ENCODE measurements at regions of chr4 and their contacts with region 1.

Region 1: GRCh38 chr4:86921608-86922252 is 13.1 kb upstream of the AFF1 start:
- DNase-seq: no peak
- H3K4me3 ChIP-seq: no peak overlapping the region
- H3K27ac ChIP-seq: no peak overlapping the region
- H3K4me1 ChIP-seq: no peaks in the 10 kb centered on the region
- H3K27me3 ChIP-seq: no peaks in the 10 kb centered on the region
- CTCF ChIP-seq: no peak
- EP300 ChIP-seq: no peak
- RAD21 ChIP-seq: no peak

Region 2: GRCh38 chr4:86685401-86685800 is 236.3 kb before region 1 on chr4:
- CTCF ChIA-PET with region 1: no interaction called
- POLR2A ChIA-PET with region 1: no interaction called
- DNase-seq: peak; percentile 5
- H3K4me3 ChIP-seq: no peak overlapping the region
- H3K27ac ChIP-seq: no peak overlapping the region
- H3K4me1 ChIP-seq: no peaks in the 10 kb centered on the region
- H3K27me3 ChIP-seq: no peaks in the 10 kb centered on the region
- CTCF ChIP-seq: no peak
- EP300 ChIP-seq: no peak; a peak in 1 of 4 replicates
- RAD21 ChIP-seq: no peak

Region 3: GRCh38 chr4:86901866-86902265 is 19.9 kb before region 1 on chr4:
- CTCF ChIA-PET with region 1: interaction called, 20 read pairs
- POLR2A ChIA-PET with region 1: no interaction called
- DNase-seq: no peak
- H3K4me3 ChIP-seq: no peak overlapping the region
- H3K27ac ChIP-seq: no peak overlapping the region
- H3K4me1 ChIP-seq: no peaks in the 10 kb centered on the region
- H3K27me3 ChIP-seq: no peaks in the 10 kb centered on the region
- CTCF ChIP-seq: no peak
- EP300 ChIP-seq: no peak
- RAD21 ChIP-seq: no peak

Region 4: DNA sequence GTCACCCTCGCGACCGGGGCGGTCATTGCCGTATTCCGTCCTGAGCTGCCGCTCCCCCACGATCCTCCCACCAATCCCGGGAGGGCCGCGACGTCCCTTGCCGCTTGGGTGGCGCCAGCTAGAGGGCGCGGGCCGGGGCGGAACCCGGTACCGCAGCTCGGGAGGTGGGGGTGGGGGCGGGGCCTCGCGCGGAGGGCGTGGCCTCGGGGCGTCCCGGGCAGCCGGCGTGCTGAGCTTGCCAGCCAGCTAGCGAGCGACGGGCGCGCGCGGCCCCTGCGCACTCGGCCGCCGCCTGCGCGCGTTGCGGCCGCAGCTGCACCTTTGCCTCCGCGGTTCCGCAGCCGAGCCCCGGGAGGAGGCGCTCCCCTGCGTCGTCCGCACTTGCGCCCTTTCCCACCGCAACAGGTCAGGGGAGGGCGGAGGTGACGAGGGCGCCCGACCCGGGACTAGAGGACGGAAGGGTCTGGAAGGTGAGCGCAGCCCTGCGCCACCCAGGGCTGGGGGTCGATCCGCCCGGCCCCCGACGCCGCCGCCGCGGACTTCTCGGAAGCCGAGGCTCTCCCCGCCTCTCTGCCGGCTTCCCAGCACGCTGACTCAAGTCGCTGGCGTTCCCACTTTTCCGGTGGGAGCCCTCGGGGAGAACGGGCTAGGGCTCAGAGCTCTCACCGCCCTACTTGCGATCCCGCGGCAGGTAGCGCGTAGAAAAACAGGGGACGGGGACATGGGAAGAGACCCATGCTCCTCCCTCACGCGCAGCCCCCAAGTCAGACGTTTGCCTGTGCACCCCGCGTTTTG is 13.2 kb after region 1 on chr4 and contains the start of gene AFF1:
- CTCF ChIA-PET with region 1: interaction called, 22 read pairs
- POLR2A ChIA-PET with region 1: interaction called, 5 read pairs
- DNase-seq: peak; percentile 98
- H3K4me3 ChIP-seq: peak within 1 kb of the TSS; percentile 71 to 84
- H3K27ac ChIP-seq: peak within 1 kb of the TSS; percentile 77 to 78
- H3K4me1 ChIP-seq: peaks cover 4 to 11% of the 10 kb centered on the region in 2 experiments; a peak in 3 of 4 replicates
- H3K27me3 ChIP-seq: no peaks in the 10 kb centered on the region
- CTCF ChIP-seq: peak; percentile 38
- EP300 ChIP-seq: no peak
- RAD21 ChIP-seq: peak; percentile 9
- polyA plus RNA-seq, gene AFF1: 2.2 and 2.7 TPM in 2 replicates

Region 5: GRCh38 chr4:87006676-87007527 is 85.2 kb after region 1 on chr4:
- CTCF ChIA-PET with region 1: interaction called, 16 read pairs
- POLR2A ChIA-PET with region 1: interaction called, 3 read pairs
- DNase-seq: peak; percentile 95
- H3K4me3 ChIP-seq: peak overlapping the region; percentile 88 to 90
- H3K27ac ChIP-seq: peak overlapping the region; percentile 98 to 99
- H3K4me1 ChIP-seq: peaks cover 6 to 11% of the 10 kb centered on the region in 2 experiments; a peak in 2 of 4 replicates
- H3K27me3 ChIP-seq: no peaks in the 10 kb centered on the region
- CTCF ChIP-seq: peak; percentile 3; the same call in 1 of the 2 replicates
- EP300 ChIP-seq: peak in 1 of 2 experiments; percentile 5; a peak in 1 of 4 replicates
- RAD21 ChIP-seq: no peak; the same call in 1 of the 2 replicates

Region 6: GRCh38 chr4:87078987-87079486 is 157.3 kb after region 1 on chr4:
- CTCF ChIA-PET with region 1: interaction called, 14 read pairs
- POLR2A ChIA-PET with region 1: no interaction called
- DNase-seq: no peak
- H3K4me3 ChIP-seq: no peak overlapping the region
- H3K27ac ChIP-seq: no peak overlapping the region
- H3K4me1 ChIP-seq: no peaks in the 10 kb centered on the region; a peak in 1 of 4 replicates
- H3K27me3 ChIP-seq: no peaks in the 10 kb centered on the region
- CTCF ChIP-seq: no peak
- EP300 ChIP-seq: no peak
- RAD21 ChIP-seq: no peak

Region 7: DNA sequence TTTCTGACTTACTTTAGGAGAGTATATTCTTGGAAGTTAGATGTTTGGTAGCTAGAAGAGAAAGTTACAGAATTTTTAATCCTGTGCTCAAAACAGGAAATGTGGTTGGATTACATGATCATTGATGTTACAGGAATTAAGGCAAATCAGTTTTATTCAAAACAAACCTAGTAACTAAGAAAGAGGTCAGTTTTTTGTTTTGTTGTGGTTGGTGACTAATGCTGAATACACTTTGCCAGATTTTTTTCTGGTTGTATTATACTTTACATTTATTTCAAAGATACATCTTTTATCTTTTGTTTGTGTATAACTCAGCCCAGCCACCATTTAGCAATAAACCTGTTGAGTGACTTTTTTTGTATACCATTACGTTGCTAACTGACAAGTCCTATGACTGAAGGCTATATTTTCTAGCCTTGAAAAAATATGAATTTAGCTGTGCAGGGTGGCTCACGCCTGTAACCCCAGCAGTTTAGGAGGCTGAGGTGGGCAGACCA is 182.0 kb after region 1 on chr4:
- CTCF ChIA-PET with region 1: interaction called, 23 read pairs
- POLR2A ChIA-PET with region 1: no interaction called
- DNase-seq: no peak
- H3K4me3 ChIP-seq: peak overlapping the region in 1 of 2 experiments; percentile 17; a peak in 1 of 4 replicates
- H3K27ac ChIP-seq: peak overlapping the region; percentile 62 to 95; a peak in 3 of 4 replicates
- H3K4me1 ChIP-seq: peaks cover 12 to 22% of the 10 kb centered on the region in 2 experiments
- H3K27me3 ChIP-seq: no peaks in the 10 kb centered on the region
- CTCF ChIP-seq: no peak
- EP300 ChIP-seq: 0 out of 4 replicates have a peak, but pooled peaks of 1 of the 2 experiments have one; percentile 16
- RAD21 ChIP-seq: no peak

Region 8: DNA sequence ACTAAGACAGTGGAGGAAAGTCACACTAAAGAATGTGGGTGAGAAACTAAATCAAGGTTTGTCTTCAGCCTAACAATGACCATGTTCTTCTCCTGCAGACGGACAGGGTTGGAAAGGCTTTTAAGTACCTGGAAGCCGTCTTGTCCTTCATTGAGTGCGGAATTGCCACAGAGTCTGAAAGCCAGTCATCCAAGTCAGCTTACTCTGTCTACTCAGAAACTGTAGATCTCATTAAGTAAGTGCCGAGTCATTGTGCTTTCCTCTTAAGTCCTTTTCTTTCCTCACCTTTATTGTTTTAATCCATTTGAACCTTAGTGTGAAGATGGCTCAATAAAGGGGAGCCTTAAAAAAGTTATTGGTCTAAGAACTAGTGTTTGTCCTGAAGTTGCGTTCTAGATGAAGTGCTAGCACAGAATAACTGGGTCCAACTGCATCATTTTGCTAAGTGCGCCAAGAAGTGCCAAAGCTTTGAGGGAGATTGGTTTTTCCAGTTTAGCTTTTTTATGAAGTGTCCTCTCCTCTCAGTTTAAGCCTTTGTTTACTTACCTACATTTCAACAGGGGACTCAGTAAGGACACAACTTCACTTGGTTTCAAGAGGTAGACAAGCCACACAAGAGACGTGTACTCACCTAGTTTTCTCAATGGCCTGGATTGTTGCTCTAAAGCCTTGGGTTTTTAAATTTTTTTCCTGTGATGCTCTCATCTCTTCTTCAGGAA is 209.4 kb after region 1 on chr4:
- CTCF ChIA-PET with region 1: no interaction called
- POLR2A ChIA-PET with region 1: no interaction called
- DNase-seq: no peak
- H3K4me3 ChIP-seq: no peak overlapping the region
- H3K27ac ChIP-seq: no peak overlapping the region
- H3K4me1 ChIP-seq: no peaks in the 10 kb centered on the region
- H3K27me3 ChIP-seq: no peaks in the 10 kb centered on the region
- CTCF ChIP-seq: no peak
- EP300 ChIP-seq: no peak
- RAD21 ChIP-seq: no peak